ENCODE measurements at regions of chr1 and their contacts with region 1.

Region 1: DNA sequence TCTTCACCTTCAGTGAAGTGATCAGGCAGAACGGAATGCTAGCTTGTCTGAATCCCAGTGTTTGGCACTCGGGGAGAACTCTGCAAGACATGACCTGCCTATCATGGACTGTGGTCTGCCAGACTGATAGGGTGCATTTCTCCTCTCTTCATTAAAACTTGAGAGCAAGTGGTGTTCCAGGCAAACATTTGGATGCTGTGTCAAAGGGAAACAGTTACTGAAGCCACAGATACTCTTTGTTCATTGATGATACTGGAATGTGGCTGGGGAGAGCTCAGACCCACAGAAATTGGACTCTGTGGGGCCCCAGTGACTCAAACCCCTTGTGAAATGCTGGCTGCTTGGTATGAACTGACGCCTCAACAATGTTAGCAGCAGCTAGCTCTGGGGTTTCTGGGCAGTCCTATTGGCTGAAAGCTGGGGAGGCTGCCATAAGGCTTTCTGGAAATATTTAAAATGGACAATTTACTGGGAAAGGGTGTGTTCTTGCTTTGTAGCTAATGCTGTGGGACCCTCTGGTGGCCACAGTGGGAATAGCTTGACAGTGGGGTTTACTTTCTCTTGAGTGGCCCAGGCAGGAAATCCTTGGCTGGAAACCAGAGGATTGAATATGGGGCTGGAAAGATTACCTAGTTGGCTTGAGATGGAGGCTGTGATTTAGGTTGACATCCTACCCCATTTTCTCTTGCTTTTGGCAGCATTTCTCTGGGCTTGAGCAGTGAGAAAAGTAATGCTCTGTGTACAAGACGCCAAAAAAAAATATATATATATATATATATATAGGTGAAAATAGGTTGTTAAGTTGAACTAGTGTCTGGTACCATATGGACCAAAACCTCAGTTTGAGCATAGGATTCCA is 8.0 kb upstream of the S100A10 start:
- DNase-seq: peak; percentile 45 to 76
- ATAC-seq: peak; percentile 60 to 66
- H3K4me3 ChIP-seq: no peak overlapping the region
- H3K27ac ChIP-seq: no peak overlapping the region
- H3K4me1 ChIP-seq: no peaks in the 10 kb centered on the region
- H3K27me3 ChIP-seq: no peaks in the 10 kb centered on the region
- CTCF ChIP-seq: peak; percentile 78 to 92 (median 79)
- POLR2A ChIP-seq: no peak

Region 2: GRCh38 chr1:151934048-151934493 is 67.5 kb before region 1 on chr1:
- in situ Hi-C with region 1: loop called (anchors 5 to 10 kb)
- intact Hi-C with region 1: loop called (anchors 2 kb)
- DNase-seq: no peak
- ATAC-seq: peak; percentile 74 to 91
- H3K4me3 ChIP-seq: no peak overlapping the region
- H3K27ac ChIP-seq: no peak overlapping the region
- H3K4me1 ChIP-seq: peaks cover 0 to 3% of the 10 kb centered on the region in 2 donors
- H3K27me3 ChIP-seq: no peaks in the 10 kb centered on the region
- CTCF ChIP-seq: peak; percentile 58 to 83 (median 74)
- POLR2A ChIP-seq: no peak

Region 3: GRCh38 chr1:152137215-152137614 is 135.6 kb after region 1 on chr1:
- in situ Hi-C with region 1: no loop called
- intact Hi-C with region 1: no loop called
- DNase-seq: no peak
- ATAC-seq: no peak
- H3K4me3 ChIP-seq: no peak overlapping the region
- H3K27ac ChIP-seq: no peak overlapping the region
- H3K4me1 ChIP-seq: no peaks in the 10 kb centered on the region
- H3K27me3 ChIP-seq: peaks cover 0 to 2% (median 0%) of the 10 kb centered on the region in 3 donors
- CTCF ChIP-seq: no peak
- POLR2A ChIP-seq: no peak

Measured in gastrocnemius medialis (tissue), 4 donors.